PC-9 (cell line): ENCODE measurements at regions of chr16 and their contacts with region 1.

Region 1: GRCh38 chr16:8567750-8568617 is 22.3 kb downstream of the TMEM114 start:
- DNase-seq: peak; percentile 77
- H3K4me3 ChIP-seq: no peak overlapping the region
- H3K27ac ChIP-seq: no peak overlapping the region
- H3K4me1 ChIP-seq: no peaks in the 10 kb centered on the region
- H3K27me3 ChIP-seq: peaks cover 9% of the 10 kb centered on the region; the same call in 1 of the 2 replicates
- CTCF ChIP-seq: peak; percentile 96

Region 2: DNA sequence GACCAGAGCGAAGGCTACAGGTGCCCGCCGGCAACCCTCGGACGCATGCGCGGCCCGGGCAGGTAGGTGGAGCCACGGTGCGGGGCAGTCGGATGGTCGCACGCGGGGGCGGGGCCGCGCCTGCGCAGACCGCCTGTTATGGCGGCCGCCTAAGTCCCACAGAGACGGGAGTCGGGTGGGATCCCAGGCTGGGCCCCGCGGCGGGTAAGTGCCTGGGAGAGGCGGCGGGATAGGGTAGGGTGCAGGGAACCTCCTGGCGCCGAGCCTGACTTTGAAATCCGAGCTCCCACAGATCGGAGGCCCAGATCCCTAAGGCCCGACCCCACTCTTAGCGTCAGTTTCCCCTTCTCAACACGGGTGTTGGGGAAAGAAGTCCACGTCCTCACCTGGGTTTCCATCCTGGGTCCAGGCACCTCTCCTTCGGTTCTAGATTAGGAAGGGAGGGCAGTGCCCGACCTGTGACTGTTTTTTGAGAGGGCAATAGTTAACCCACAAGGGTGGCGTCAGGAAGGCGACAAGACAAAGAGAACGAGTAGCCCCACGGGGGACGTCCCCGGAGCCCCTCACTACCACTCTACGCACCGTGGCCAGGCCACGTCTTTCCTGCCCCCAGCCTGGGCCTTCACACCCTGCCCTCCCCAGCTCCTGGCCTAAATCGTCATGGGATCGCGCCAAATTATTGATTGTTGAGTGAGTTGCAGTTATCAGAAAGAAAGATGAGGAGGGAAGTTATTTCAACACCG is 53.8 kb after region 1 on chr16 and contains the start of gene METTL22:
- CTCF ChIA-PET with region 1: interaction called, 3 read pairs
- POLR2A ChIA-PET with region 1: no interaction called
- intact Hi-C with region 1: loop called (anchors 2 kb)
- DNase-seq: peak; percentile 60 to 93
- H3K4me3 ChIP-seq: peak within 1 kb of the TSS; percentile 84
- H3K27ac ChIP-seq: peak within 1 kb of the TSS; percentile 48
- H3K4me1 ChIP-seq: peaks cover 15% of the 10 kb centered on the region
- H3K27me3 ChIP-seq: peaks cover 23% of the 10 kb centered on the region; the same call in 1 of the 2 replicates
- CTCF ChIP-seq: no peak
- total RNA-seq, gene METTL22: 62.2 and 79.2 TPM in 2 replicates

Region 3: GRCh38 chr16:8885674-8886592 is 317.9 kb after region 1 on chr16:
- CTCF ChIA-PET with region 1: no interaction called
- POLR2A ChIA-PET with region 1: no interaction called
- intact Hi-C with region 1: loop called (anchors 2 kb)
- DNase-seq: peak in 1 of 2 experiments; percentile 56
- H3K4me3 ChIP-seq: no peak overlapping the region
- H3K27ac ChIP-seq: peak overlapping the region; percentile 26; the same call in 1 of the 2 replicates
- H3K4me1 ChIP-seq: peaks cover 22% of the 10 kb centered on the region
- H3K27me3 ChIP-seq: no peaks in the 10 kb centered on the region
- CTCF ChIP-seq: no peak